Sigmoid colon (tissue), 7 donors: ENCODE measurements at regions of chr4 and their contacts with region 1.

Region 1: DNA sequence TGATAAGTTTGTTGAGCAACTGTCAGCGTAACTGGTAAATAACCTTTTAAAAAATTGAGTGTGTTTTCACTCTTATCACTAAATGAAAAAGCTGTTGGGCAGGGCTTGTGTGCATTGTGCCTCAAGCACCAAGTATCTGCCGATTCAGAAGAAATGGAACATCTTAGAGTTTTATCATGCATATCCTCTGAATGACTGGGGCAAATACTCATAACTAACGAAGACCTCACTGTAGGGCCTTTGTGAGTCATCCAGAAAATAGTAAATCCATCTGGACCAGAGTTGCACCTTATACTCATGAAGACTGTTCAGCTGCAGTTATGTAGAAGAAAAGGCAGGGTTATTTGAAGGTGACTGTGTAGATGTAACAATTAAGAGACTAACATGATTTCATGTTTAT is 222.1 kb downstream of the CAMK2D start:
- DNase-seq: no peak
- H3K4me3 ChIP-seq: no peak overlapping the region
- H3K27ac ChIP-seq: no peak overlapping the region
- H3K4me1 ChIP-seq: peaks cover 0 to 29% (median 18%) of the 10 kb centered on the region in 4 donors
- H3K27me3 ChIP-seq: no peaks in the 10 kb centered on the region
- CTCF ChIP-seq: no peak
- EP300 ChIP-seq: no peak
- POLR2A ChIP-seq: no peak

Region 2: DNA sequence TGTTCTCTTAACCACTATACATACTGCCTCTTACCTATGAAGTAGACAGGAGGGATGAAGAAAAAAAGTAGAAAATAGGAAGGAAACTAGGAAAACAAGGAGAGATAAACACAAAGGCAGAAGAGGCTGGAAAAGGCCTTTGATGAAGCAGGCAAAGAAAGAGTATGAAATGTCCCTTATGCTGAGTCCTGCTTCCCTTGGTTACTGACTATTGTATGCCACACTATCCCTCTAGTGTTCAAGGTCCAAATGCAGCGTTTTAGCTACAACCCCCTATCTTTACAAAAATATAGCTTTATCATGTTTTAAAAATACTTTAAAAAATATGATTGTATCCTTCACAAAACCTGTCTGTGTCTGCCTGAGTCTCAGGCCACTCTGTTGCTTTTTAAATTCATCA is 11.0 kb before region 1 on chr4:
- intact Hi-C with region 1: loop called (anchors 1 kb)
- DNase-seq: no peak
- H3K4me3 ChIP-seq: no peak overlapping the region
- H3K27ac ChIP-seq: no peak overlapping the region
- H3K4me1 ChIP-seq: no peaks in the 10 kb centered on the region
- H3K27me3 ChIP-seq: no peaks in the 10 kb centered on the region
- CTCF ChIP-seq: no peak
- EP300 ChIP-seq: no peak
- POLR2A ChIP-seq: no peak